ENCODE measurements at regions of chr4 and their contacts with region 1.

Region 1: DNA sequence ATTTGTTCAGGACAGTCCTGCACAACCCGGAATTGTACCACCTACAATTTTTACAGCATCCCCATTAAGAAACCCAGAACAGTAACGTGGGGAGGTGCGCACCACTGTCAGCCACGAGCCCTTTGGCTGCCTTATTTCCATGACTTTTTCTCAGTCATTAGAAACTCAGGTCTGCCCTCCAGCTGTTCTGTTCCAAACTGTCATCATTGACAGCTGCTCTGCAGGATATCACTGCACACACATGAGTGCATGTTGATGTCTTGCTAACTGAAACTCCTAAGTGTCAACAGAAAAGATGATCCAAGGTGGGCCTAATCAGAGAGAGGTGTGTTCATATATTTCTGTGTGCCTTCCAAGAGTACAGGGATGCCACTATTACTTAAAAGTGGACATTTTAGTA is 123.4 kb downstream of the PARM1 start:
- DNase-seq: no peak
- ATAC-seq: peak in 3 of 4 donors; percentile 55 to 63 (median 60)
- H3K4me3 ChIP-seq: no peak overlapping the region
- H3K27ac ChIP-seq: no peak overlapping the region
- H3K4me1 ChIP-seq: peaks cover 0 to 9% (median 0%) of the 10 kb centered on the region in 12 donors
- H3K27me3 ChIP-seq: no peaks in the 10 kb centered on the region
- CTCF ChIP-seq: peak in 3 of 12 donors; percentile 9 to 33 (median 12)
- POLR2A ChIP-seq: no peak

Region 2: DNA sequence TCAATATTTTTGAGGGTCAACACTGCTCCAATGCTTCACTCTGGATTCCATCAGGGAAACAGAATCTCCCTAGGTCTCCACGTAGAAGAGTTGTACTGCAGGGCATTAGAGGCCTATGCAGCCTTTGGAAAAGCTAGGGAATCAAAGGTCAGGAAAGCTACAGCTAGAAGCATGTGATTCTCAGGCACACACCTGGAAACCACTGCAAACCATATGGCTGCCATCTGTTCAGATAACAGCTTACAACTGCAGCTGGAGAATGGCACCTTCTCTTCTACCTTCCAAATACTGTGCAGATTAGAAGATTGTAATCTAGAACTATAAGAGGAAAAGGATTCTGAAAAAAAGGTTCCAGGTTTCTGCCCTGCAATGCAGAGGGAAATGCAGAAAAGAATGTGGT is 322.5 kb before region 1 on chr4:
- intact Hi-C with region 1: no loop called
- DNase-seq: no peak
- ATAC-seq: no peak
- H3K4me3 ChIP-seq: no peak overlapping the region
- H3K27ac ChIP-seq: no peak overlapping the region
- H3K4me1 ChIP-seq: no peaks in the 10 kb centered on the region
- H3K27me3 ChIP-seq: no peaks in the 10 kb centered on the region
- CTCF ChIP-seq: no peak
- POLR2A ChIP-seq: no peak

Region 3: DNA sequence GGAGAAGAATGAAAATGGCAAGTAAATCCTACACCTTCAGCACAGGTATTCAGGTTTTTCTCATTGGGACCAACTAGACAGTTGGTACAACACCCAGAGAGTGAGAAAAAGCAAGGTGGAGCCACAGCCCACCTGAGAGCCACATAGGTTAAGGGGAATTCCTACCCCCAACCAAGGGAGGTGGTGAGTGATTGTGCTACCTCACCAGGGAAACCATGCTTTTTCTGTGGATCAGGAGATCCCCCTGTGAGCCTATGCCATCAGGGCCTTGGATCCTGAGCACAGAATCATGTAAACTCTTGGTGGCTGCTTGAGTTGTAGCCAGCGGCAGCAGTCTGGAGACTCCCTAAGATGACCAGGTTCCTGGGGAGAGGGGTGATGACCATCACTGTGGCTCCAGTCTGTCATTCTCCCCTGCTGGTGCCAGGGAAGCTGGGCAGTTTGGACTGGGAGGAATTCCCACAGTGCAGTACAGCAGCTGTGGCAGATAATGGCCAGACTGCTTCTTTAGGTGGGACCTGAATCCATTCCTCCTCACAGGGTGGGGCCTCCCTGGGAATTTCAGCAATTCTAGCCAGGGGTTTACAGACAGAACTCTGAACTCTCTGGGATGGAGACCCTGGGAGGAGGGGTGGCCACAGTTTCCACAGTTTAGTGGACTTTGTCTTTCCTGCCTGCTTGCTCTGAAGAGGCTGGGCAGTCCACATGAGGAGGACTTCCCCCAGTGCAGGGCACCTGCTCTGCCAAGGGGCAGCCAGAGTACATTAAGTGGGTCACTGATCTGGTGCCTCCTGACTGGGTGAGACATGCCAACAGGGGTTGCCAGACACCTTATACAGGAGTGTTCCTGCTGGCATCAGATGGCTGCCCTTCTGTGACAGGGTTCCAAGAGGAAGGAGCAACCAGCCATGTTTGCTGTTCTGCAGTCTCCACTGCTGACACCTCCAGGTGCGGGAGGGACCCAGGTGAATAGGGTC is 80.1 kb before region 1 on chr4:
- intact Hi-C with region 1: loop called in 1 of 10 experiments (anchors 5 kb)
- DNase-seq: peak in 4 of 5 donors; percentile 20 to 58 (median 40)
- ATAC-seq: peak in 3 of 4 donors; percentile 42 to 77 (median 70)
- H3K4me3 ChIP-seq: no peak overlapping the region
- H3K27ac ChIP-seq: no peak overlapping the region
- H3K4me1 ChIP-seq: peaks cover 0 to 28% (median 4%) of the 10 kb centered on the region in 12 donors
- H3K27me3 ChIP-seq: no peaks in the 10 kb centered on the region
- CTCF ChIP-seq: no peak
- POLR2A ChIP-seq: no peak

Measured in heart left ventricle (tissue), 16 donors.